ENCODE measurements at regions of chr1 and their contacts with region 1.

Region 1: DNA sequence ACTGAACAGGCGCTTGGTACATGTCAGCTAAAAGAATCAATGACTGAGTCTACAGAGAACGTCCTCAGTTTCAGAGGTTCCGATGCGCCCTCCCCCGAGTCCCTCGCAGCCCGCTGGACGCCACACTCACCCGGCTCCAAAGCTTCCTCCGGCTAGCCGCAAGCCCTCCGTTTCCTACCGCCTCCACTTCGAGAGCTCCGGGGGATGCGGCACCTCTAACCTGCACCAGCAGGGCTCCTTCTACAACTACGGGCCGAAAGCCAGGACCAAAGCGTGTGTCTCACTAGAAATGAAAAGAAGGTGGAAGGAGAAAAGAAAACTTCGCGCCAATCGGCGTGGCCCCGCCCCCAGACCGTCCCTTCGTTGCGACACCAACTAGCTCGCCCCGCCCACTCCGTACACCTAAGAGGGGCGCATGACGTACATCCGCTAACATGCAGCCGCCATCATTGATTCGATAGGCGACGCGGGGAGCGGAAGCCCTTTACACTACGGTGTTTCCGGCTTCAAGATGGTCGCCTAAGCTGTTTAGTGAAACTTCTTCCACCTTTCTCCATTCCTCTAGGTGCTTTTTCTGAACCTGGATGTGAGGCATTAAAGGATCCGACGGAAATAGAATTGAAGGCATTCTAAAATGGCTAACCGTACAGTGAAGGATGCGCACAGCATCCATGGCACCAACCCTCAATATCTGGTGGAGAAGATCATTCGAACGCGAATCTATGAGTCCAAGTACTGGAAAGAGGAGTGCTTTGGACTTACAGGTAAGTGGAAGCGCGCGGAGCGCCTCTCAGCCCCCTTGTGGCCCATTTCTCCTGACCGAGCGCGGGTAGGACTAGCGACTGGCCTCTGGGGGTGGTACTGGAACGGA is at the starts of genes ORC1 and PRPF38A:
- DNase-seq: peak; percentile 99
- H3K4me3 Mint-ChIP-seq: peak within 1 kb of the TSS; percentile 99
- H3K27ac Mint-ChIP-seq: peak within 1 kb of the TSS; percentile 99
- H3K4me1 Mint-ChIP-seq: peaks cover 65% of the 10 kb centered on the region
- H3K27me3 Mint-ChIP-seq: no peaks in the 10 kb centered on the region

Region 2: GRCh38 chr1:52424231-52424636 is 19.9 kb after region 1 on chr1:
- CTCF ChIA-PET with region 1: interaction called, 13 read pairs
- DNase-seq: peak; percentile 42
- H3K4me3 Mint-ChIP-seq: peak overlapping the region; percentile 39
- H3K27ac Mint-ChIP-seq: peak overlapping the region; percentile 99
- H3K4me1 Mint-ChIP-seq: peaks cover 54% of the 10 kb centered on the region
- H3K27me3 Mint-ChIP-seq: no peaks in the 10 kb centered on the region

Region 3: DNA sequence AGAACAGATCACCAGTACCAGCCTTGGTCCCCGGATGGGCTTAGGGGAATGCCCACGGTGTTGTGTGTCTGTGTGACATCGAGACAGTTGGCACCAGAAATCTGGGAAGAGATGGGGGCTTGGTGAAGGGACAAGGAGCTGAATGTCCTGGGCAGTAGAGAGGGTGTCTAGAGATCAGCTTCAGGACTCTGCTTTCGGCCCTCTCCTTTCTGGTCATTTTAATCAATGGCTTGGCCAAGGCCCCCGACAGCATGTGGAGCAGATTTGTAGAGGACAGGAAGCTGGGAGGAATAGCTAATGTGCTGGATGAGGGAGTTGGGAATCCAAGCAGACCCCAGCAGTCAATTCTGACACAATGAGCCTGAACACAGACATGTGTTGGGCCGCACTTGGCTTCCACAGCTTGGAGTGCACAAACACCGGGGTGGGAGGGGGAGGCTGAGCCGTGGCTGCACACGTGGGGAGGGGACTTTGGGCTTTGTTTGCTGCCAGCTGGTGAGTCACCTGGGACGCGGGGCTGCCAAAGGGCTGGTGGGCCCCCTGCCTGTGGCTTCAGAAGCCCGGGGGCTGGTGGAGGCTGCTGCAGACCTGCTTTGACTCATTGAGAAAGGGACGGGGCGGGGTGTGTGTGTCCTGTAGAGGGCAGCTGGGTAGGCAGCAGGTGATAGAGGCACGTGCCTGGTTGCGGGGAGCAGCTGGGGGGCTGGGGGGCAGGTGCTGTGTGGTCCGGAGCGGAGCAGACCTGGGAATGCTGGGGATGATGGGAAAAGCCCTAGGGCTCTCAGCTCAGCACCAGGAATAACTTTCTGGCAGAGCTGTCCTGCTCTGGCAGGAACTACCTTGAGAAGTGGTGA is 717.2 kb after region 1 on chr1:
- CTCF ChIA-PET with region 1: no interaction called
- DNase-seq: no peak
- H3K4me3 Mint-ChIP-seq: no peak overlapping the region
- H3K27ac Mint-ChIP-seq: no peak overlapping the region
- H3K4me1 Mint-ChIP-seq: no peaks in the 10 kb centered on the region
- H3K27me3 Mint-ChIP-seq: peaks cover 8% of the 10 kb centered on the region